MCF 10A (cell line): ENCODE measurements at regions of chr5 and their contacts with region 1.

Region 1: GRCh38 chr5:6745706-6746222 is 32.5 kb downstream of the TENT4A start:
- DNase-seq: peak; percentile 62
- H3K4me3 Mint-ChIP-seq: no peak overlapping the region
- H3K27ac Mint-ChIP-seq: no peak overlapping the region
- H3K4me1 Mint-ChIP-seq: no peaks in the 10 kb centered on the region
- H3K27me3 Mint-ChIP-seq: no peaks in the 10 kb centered on the region
- CTCF ChIP-seq: peak; percentile 55

Region 2: DNA sequence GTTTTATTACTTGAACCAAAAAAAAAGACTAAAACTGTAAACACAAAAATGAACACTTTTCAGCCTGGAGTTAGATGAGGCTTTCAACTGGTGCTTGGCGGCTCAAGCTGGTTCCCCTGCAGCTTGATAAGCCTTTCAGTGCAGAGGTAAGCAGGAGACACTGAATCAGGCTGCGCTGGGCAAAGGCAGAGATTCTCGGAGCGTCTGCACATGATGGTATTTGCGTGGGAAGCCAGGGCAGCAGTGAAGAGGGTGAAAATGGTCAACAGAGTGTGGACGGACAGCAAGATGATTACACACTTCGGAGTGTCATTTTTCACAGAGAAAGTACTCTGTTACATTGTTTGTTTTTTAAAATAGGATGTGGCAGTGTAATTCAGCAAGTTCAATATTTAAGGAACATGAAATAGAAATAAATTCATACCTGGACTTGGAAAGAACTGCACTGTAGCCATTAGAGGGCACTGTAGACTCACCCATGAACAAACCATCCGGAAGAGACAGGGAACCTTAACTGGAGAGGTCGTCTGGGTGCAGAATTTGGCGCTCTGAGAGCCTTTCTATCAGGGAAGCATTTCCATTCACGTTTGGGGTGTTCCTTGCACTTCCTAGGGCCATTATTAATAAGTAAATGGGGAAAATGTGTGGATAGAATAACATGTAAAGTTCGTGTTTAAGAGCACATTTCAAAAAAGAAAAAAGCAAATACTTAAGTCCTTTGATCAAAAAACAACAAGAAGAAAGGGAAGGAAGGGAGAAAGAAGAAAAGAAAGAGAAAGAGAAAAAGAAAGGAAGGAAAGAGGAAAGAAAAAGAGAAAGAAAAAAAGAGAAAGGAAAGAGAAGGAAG is 1253.5 kb before region 1 on chr5:
- CTCF ChIA-PET with region 1: interaction called, 4 read pairs
- POLR2A ChIA-PET with region 1: no interaction called
- intact Hi-C with region 1: loop called (anchors 1 kb)
- DNase-seq: peak; percentile 69
- H3K4me3 Mint-ChIP-seq: peak overlapping the region; percentile 11
- H3K27ac Mint-ChIP-seq: no peak overlapping the region
- H3K4me1 Mint-ChIP-seq: peaks cover 7% of the 10 kb centered on the region
- H3K27me3 Mint-ChIP-seq: no peaks in the 10 kb centered on the region
- CTCF ChIP-seq: peak; percentile 64

Region 3: GRCh38 chr5:6377905-6378765 is 367.6 kb before region 1 on chr5 and contains the start of gene MED10:
- CTCF ChIA-PET with region 1: no interaction called
- POLR2A ChIA-PET with region 1: no interaction called
- intact Hi-C with region 1: loop called (anchors 10 kb)
- DNase-seq: peak; percentile 92
- H3K4me3 Mint-ChIP-seq: peak within 1 kb of the TSS; percentile 99
- H3K27ac Mint-ChIP-seq: peak within 1 kb of the TSS; percentile 98
- H3K4me1 Mint-ChIP-seq: peaks cover 14% of the 10 kb centered on the region
- H3K27me3 Mint-ChIP-seq: no peaks in the 10 kb centered on the region
- CTCF ChIP-seq: no peak
- total RNA-seq, gene MED10: 84.9 and 85.1 TPM in 2 replicates

Region 4: DNA sequence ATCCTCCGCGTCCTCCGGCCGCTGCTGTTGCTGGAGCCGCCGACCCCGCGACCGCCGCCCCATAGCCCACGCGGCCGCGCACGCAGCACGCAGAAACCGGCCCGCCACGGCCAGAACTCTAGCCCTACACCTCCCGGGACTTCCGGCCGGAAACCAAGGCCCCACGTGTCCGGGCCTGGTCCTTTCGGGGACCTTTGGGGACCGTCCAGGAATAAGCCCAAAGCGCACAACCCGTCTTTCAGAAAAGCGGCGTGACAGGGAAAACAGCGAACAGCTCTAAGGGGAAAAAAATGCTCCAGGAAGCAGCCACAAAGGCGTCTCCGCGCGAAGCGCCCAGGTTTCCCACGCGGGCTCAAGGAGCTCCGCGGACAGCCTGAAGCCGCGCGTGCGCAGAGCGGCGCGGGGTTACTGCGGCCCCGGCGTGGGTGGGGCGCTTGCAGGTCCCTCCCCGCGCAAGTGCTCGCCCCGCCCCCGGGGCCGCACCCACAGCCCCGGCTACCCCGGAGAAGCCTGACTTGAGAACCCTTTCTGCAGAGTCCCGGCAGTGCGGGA is 112.8 kb before region 1 on chr5 and contains the starts of genes NSUN2 and SRD5A1:
- CTCF ChIA-PET with region 1: interaction called, 26 read pairs
- POLR2A ChIA-PET with region 1: interaction called, 13 read pairs
- intact Hi-C with region 1: loop called (anchors 1 kb)
- DNase-seq: peak; percentile 88
- H3K4me3 Mint-ChIP-seq: peak within 1 kb of the TSS; percentile 96
- H3K27ac Mint-ChIP-seq: peak within 1 kb of the TSS; percentile 95
- H3K4me1 Mint-ChIP-seq: peaks cover 32% of the 10 kb centered on the region
- H3K27me3 Mint-ChIP-seq: no peaks in the 10 kb centered on the region
- CTCF ChIP-seq: no peak
- total RNA-seq, gene NSUN2: 89.6 and 95.7 TPM in 2 replicates
- total RNA-seq, gene SRD5A1: 12.2 and 12.4 TPM in 2 replicates

Region 5: DNA sequence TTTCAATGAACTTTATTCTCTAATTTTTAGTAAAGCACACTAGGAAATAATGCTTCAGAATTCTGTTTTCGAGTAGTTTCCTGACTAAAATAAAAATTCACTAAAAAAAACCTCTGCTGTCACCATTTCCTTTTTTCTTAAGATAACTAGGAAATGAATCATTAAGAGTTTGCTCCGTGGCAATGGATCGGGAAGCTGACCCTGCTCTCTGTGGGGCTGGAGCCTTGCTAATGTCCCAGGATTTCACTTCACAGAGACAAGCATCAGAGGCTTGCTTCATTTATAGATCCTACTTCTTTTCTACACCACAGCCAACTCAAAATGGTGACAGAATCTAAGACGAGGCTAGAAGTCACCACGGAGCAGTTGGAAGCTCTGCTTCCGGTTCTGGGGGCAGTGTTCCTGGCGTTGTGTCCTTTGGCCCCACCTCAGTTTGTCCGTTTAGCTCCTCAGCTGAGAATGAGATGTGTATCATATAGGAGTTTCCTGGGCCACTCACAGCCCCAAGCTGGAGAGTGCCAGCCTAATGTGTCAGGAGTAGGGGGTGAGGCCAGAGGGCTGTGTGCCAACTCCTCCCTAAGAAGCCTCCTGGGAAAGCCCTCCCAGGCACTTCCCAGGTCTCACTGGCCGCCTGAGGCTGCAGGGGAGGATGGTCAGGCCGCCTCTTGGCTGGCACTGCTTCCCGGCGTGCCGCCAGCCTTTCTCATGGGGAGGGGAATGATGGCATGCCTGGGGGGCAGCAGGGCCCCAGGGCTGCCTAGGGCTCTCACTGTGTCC is 12.9 kb before region 1 on chr5:
- CTCF ChIA-PET with region 1: interaction called, 25 read pairs
- POLR2A ChIA-PET with region 1: interaction called, 3 read pairs
- intact Hi-C with region 1: no loop called
- DNase-seq: peak; percentile 91
- H3K4me3 Mint-ChIP-seq: peak overlapping the region; percentile 50
- H3K27ac Mint-ChIP-seq: peak overlapping the region; percentile 74
- H3K4me1 Mint-ChIP-seq: peaks cover 34% of the 10 kb centered on the region
- H3K27me3 Mint-ChIP-seq: no peaks in the 10 kb centered on the region
- CTCF ChIP-seq: no peak

Region 6: DNA sequence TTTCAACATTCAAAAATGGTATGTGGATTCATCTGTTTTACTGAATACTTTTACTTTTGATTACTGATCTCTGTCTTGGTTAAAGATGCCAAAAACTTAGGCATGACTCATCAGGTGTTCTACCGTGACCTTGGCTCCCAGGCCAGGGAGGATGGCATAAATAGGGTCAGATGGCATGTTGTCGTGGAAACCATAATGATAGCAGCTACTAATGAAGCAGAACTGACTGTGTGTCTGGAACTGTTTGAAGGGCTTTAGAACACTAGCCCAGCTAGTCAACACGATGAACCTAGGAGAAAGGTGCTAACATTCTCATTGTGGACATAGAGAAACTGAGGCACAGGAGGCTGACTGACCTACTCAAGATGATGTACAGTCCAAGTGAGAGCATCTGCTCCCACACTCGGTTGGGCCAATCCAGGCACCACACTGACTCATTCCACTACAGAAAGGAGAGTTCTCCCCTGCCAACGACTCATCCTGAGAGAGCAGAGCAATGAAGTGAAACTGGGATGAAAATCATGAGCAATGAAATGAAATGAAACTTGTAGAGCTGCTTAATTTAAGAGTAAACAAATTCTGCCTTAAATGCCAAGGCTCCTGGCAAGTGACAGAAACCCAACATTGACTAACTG is 83.5 kb after region 1 on chr5:
- CTCF ChIA-PET with region 1: no interaction called
- POLR2A ChIA-PET with region 1: no interaction called
- intact Hi-C with region 1: no loop called
- DNase-seq: no peak
- H3K4me3 Mint-ChIP-seq: no peak overlapping the region
- H3K27ac Mint-ChIP-seq: no peak overlapping the region
- H3K4me1 Mint-ChIP-seq: no peaks in the 10 kb centered on the region
- H3K27me3 Mint-ChIP-seq: peaks cover 34% of the 10 kb centered on the region
- CTCF ChIP-seq: no peak